H1 (cell line): ENCODE measurements at regions of chr5 and their contacts with region 1.

Region 1: DNA sequence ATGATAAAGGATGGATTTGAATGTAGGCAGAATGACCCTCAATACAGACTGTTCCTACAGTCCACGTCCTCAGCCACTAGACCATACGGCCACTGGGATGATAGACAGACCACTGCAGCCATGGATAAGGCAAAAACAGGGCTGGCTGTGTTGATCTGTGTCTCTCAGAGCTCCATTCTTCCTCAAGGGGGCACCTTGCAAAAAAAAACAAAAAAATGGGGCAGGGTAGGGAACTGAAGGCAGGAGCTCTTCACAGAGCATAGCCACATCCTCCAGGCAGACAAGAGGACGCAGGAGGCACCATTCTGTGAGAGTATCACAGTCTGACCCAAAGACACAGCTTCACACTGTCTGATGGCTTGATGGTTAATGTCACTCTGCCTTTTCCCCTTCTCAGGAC is 61.2 kb upstream of the GABRP start:
- DNase-seq: no peak
- H3K4me3 ChIP-seq: no peak overlapping the region
- H3K27ac ChIP-seq: no peak overlapping the region
- H3K4me1 ChIP-seq: no peaks in the 10 kb centered on the region
- H3K27me3 ChIP-seq: no peaks in the 10 kb centered on the region
- CTCF ChIP-seq: peak in 1 of 3 experiments; percentile 22; a peak in 2 of 4 replicates
- EP300 ChIP-seq: no peak
- POLR2A ChIP-seq: no peak
- RAD21 ChIP-seq: no peak; a peak in 1 of 4 replicates

Region 2: GRCh38 chr5:170597109-170597751 is 125.1 kb before region 1 on chr5:
- CTCF ChIA-PET with region 1: no interaction called
- POLR2A ChIA-PET with region 1: no interaction called
- DNase-seq: no peak
- H3K4me3 ChIP-seq: no peak overlapping the region
- H3K27ac ChIP-seq: no peak overlapping the region
- H3K4me1 ChIP-seq: peaks cover 0 to 2% (median 0%) of the 10 kb centered on the region in 4 experiments; a peak in 1 of 7 replicates
- H3K27me3 ChIP-seq: no peaks in the 10 kb centered on the region; a peak in 1 of 7 replicates
- CTCF ChIP-seq: no peak
- EP300 ChIP-seq: no peak
- POLR2A ChIP-seq: no peak
- RAD21 ChIP-seq: no peak

Region 3: GRCh38 chr5:170691657-170692056 is 30.7 kb before region 1 on chr5:
- CTCF ChIA-PET with region 1: interaction called, 14 read pairs
- POLR2A ChIA-PET with region 1: no interaction called
- DNase-seq: peak in 1 of 2 experiments; percentile 75
- H3K4me3 ChIP-seq: no peak overlapping the region
- H3K27ac ChIP-seq: no peak overlapping the region
- H3K4me1 ChIP-seq: no peaks in the 10 kb centered on the region
- H3K27me3 ChIP-seq: no peaks in the 10 kb centered on the region
- CTCF ChIP-seq: peak; percentile 76 to 82 (median 77)
- EP300 ChIP-seq: no peak
- POLR2A ChIP-seq: no peak
- RAD21 ChIP-seq: peak; percentile 88 to 91

Region 4: DNA sequence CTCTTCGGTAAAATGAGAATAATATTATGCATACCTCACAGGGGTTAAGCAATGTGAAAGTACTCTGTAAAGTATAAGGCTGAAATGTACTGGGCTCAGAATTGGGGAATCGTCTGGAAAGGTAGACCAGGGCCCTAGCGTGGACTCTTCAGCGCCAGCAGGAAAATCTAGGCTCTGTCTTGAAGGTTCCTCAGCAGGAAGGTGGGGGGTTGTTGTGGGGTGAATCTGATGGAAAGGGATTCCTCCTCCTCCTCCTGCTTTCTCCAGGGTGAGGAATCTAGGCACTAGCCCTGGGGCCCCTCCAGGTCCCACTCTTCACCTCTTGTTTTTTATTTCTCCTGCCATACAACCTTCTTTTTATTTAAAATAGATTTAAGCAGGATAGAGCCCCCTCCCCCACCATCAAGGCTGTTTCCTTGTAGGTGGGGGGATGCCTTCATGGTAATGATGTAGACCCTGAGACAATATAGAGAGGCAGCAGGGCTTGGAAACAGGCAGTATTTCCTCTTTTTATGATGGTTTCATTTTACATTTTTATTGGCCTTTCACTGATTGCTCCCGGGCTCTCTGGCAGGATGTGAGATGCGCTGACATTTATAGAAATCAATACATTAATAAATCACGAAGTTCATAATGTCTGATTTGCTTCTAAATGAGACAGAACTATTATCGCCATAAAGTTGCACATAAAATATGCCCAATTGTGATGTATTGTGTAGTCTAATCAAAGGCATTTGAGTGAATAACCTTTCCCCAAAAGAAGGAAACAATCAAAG is 17.7 kb before region 1 on chr5:
- CTCF ChIA-PET with region 1: interaction called, 39 read pairs
- POLR2A ChIA-PET with region 1: no interaction called
- DNase-seq: no peak
- H3K4me3 ChIP-seq: no peak overlapping the region
- H3K27ac ChIP-seq: no peak overlapping the region
- H3K4me1 ChIP-seq: no peaks in the 10 kb centered on the region
- H3K27me3 ChIP-seq: no peaks in the 10 kb centered on the region
- CTCF ChIP-seq: no peak
- EP300 ChIP-seq: no peak
- POLR2A ChIP-seq: no peak
- RAD21 ChIP-seq: no peak

Region 5: DNA sequence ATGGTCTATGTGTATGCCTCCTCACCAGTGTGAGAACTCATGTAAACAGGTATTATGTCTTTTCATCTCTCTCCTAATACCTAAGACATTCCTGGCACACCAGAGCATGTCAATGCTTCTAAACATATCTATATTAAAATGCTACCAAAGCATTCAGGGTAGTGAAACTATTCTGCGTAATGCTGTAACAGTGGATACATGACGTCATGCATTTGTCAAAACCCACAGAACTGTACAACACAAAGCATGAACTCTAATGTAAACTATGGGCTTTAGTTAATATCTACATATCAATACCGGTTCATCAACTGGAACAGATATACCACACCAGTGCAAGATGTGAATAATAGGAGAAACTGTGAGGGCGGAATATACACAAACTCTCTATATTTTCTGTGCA is 11.0 kb before region 1 on chr5:
- CTCF ChIA-PET with region 1: interaction called, 39 read pairs
- POLR2A ChIA-PET with region 1: interaction called, 8 read pairs
- DNase-seq: no peak
- H3K4me3 ChIP-seq: no peak overlapping the region
- H3K27ac ChIP-seq: no peak overlapping the region
- H3K4me1 ChIP-seq: no peaks in the 10 kb centered on the region
- H3K27me3 ChIP-seq: no peaks in the 10 kb centered on the region
- CTCF ChIP-seq: no peak
- EP300 ChIP-seq: no peak
- POLR2A ChIP-seq: no peak
- RAD21 ChIP-seq: no peak

Region 6: GRCh38 chr5:170732685-170733084 is 10.4 kb after region 1 on chr5:
- CTCF ChIA-PET with region 1: interaction called, 10 read pairs
- POLR2A ChIA-PET with region 1: no interaction called
- DNase-seq: peak in 1 of 2 experiments; percentile 7
- H3K4me3 ChIP-seq: no peak overlapping the region
- H3K27ac ChIP-seq: no peak overlapping the region
- H3K4me1 ChIP-seq: peaks cover 3 to 11% (median 5%) of the 10 kb centered on the region in 4 experiments; a peak in 5 of 7 replicates
- H3K27me3 ChIP-seq: no peaks in the 10 kb centered on the region
- CTCF ChIP-seq: no peak
- EP300 ChIP-seq: no peak
- POLR2A ChIP-seq: no peak
- RAD21 ChIP-seq: no peak